A673 (cell line): ENCODE measurements at regions of chr12 and their contacts with region 1.

Region 1: DNA sequence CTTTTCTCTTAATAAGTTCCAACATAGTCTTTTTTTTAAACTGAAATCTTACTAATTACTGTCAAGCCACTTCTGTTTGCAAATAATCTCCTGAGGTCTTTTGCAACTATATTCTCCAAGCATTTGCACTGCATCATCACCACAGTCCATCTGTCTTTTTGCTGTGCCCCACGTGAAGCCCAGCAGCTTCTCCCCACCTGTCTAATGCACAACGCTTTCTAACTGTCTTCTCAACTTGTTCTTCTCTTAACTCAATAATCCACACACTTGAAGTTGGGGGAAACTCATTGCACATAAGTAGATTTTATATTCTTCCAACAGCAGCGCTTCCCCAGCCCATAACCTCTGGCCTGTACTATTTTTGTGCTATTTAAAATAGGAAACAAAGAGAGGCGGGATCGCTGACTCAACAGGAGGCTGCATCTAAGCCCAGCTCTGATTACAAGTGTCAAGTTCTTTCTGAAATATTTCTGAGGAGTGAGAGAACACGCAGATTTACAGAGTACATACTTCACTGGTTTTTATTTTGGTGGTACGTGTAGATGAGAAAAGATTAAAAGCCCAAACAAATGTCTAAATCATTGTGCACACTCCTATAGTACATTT is 226.7 kb downstream of the GXYLT1 start:
- DNase-seq: peak; percentile 50
- H3K4me3 ChIP-seq: peak overlapping the region; percentile 2
- H3K27ac ChIP-seq: peak overlapping the region; percentile 48
- H3K4me1 ChIP-seq: peaks cover 70% of the 10 kb centered on the region
- H3K27me3 ChIP-seq: no peaks in the 10 kb centered on the region
- CTCF ChIP-seq: no peak

Region 2: GRCh38 chr12:41521872-41522379 is 396.0 kb before region 1 on chr12:
- CTCF ChIA-PET with region 1: no interaction called
- POLR2A ChIA-PET with region 1: no interaction called
- intact Hi-C with region 1: loop called (anchors 10 kb)
- DNase-seq: peak; percentile 95
- H3K4me3 ChIP-seq: peak overlapping the region; percentile 15
- H3K27ac ChIP-seq: peak overlapping the region; percentile 57
- H3K4me1 ChIP-seq: peaks cover 48% of the 10 kb centered on the region
- H3K27me3 ChIP-seq: no peaks in the 10 kb centered on the region
- CTCF ChIP-seq: no peak

Region 3: DNA sequence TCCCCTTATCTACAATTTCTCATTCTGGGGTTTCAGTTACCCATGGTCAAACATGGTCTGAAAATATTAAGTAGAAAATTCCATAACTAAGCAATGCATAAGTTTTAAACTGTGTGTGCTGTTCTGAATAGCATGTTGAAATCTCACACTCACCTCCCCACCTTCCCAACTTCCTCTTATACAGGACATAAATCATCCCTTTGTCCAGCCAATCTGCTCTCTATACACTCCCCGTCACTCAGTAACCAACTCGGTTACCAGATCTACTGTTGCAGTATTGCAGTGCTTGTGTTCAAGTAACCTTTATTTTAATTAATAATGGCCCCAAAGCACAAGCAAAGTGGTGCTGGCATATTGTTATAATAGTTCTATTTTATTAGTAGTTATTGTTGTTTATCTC is 193.7 kb before region 1 on chr12:
- CTCF ChIA-PET with region 1: no interaction called
- POLR2A ChIA-PET with region 1: no interaction called
- intact Hi-C with region 1: no loop called
- DNase-seq: no peak
- H3K4me3 ChIP-seq: no peak overlapping the region
- H3K27ac ChIP-seq: no peak overlapping the region
- H3K4me1 ChIP-seq: no peaks in the 10 kb centered on the region
- H3K27me3 ChIP-seq: no peaks in the 10 kb centered on the region
- CTCF ChIP-seq: no peak

Region 4: GRCh38 chr12:41802803-41803202 is 115.2 kb before region 1 on chr12:
- CTCF ChIA-PET with region 1: no interaction called
- POLR2A ChIA-PET with region 1: no interaction called
- intact Hi-C with region 1: loop called (anchors 5 kb)
- DNase-seq: peak; percentile 23
- H3K4me3 ChIP-seq: no peak overlapping the region
- H3K27ac ChIP-seq: peak overlapping the region; percentile 72
- H3K4me1 ChIP-seq: peaks cover 18% of the 10 kb centered on the region
- H3K27me3 ChIP-seq: no peaks in the 10 kb centered on the region
- CTCF ChIP-seq: no peak

Region 5: DNA sequence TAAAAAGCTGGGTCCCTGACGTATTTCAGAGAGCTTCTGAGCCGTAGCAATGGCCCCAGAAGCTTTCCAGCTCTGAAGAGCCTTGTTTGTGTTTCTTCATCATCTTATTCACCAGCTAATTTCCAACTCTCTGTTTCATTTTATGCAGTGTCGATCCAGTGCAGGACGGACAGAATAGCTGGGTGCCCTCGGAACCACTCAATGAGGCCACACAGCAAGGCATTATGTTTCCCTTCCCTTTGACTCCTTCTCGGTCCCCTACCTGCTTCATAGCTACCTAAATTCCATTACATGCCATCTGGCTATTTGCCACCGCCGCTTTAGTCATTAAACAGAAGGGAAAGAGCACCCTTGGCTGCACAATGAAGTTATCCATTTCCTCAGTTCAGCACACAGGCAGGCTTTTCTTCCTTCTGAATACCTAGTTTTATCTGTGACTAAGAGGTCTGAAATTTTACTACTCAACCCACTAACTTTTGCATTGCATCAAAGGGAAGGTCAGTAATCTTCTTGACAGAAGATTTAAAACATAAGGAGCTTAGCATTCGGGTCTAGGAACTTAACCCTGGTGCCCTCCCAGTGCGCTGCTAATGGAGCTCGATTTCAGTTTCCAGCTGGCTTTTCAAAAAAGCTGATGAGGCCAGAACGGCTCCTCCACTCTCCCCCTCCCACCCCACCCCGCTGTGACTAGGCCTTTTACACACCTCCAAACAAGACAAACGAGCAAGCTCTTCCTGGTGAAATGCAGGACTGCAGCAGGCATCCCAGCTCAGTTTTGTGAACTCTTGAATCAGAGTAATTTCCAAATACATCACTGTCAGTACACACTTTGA is 49.9 kb after region 1 on chr12:
- CTCF ChIA-PET with region 1: no interaction called
- POLR2A ChIA-PET with region 1: no interaction called
- intact Hi-C with region 1: no loop called
- DNase-seq: peak; percentile 65
- H3K4me3 ChIP-seq: no peak overlapping the region
- H3K27ac ChIP-seq: no peak overlapping the region
- H3K4me1 ChIP-seq: peaks cover 14% of the 10 kb centered on the region
- H3K27me3 ChIP-seq: no peaks in the 10 kb centered on the region
- CTCF ChIP-seq: no peak